Activated CD8-positive, alpha-beta T cell treated with anti-CD3 and anti-CD28 coated beads, Interleukin-2, amount 10 ng/mL, durations not matched to agents 7 days and 5 days (primary cell): ENCODE measurements at regions of chr2 and their contacts with region 1.

Region 1: GRCh38 chr2:101831351-101831865 is 133.9 kb downstream of the MAP4K4 start:
- DNase-seq: peak; percentile 74
- ATAC-seq: peak; percentile 73
- H3K4me3 Mint-ChIP-seq: no peak overlapping the region
- H3K27ac Mint-ChIP-seq: peak overlapping the region; percentile 66
- H3K4me1 Mint-ChIP-seq: peaks cover 54% of the 10 kb centered on the region
- H3K27me3 Mint-ChIP-seq: no peaks in the 10 kb centered on the region

Region 2: GRCh38 chr2:101419096-101419663 is 412.2 kb before region 1 on chr2:
- CTCF ChIA-PET with region 1: interaction called, 83 read pairs
- POLR2A ChIA-PET with region 1: no interaction called
- DNase-seq: peak; percentile 80
- ATAC-seq: peak; percentile 60
- H3K4me3 Mint-ChIP-seq: no peak overlapping the region
- H3K27ac Mint-ChIP-seq: no peak overlapping the region
- H3K4me1 Mint-ChIP-seq: peaks cover 2% of the 10 kb centered on the region
- H3K27me3 Mint-ChIP-seq: no peaks in the 10 kb centered on the region

Region 3: DNA sequence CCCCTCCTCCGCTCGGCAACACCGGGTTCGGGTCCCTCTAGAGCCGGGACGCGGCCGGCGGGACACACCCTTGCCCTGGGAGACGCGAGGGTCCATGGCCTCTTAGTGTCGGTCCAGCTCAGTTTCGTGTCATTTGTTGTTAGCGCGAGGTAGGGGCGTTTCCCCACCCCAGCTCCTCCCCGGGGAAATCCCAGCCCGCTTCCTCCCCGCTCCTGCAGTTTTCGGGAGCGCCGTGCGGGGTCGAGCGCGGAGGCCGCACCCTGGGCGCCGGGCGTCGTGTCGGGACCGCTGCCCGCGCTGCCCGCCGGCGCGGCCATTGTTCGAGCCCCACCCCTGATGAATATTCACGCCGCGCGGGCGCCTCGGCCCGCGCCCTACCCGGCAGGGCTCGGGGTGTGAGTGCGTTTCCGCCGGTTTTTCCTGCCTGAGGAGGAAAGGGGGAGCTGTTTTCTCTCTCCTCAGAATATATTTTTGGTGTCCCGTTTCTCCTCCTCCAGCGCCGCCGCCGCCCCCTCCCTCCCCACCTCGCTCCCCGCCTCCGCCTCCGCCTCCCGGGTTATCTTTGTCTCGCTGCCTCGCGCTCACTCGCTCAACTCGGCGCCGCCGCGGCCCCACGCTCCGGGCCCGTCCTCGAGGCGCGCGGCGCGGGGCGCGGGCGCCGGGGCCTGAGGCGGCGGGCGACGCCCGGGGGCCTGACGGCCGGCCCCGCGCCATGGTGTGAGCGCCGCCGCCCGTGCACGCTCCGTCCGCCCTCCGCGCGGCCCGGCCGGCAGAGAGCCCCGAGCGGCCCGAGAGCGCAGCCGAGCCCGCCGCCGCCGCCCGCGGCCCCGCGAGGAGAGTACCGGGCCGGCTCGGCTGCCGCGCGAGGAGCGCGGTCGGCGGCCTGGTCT is 134.0 kb before region 1 on chr2 and contains the start of gene MAP4K4:
- CTCF ChIA-PET with region 1: interaction called, 11 read pairs
- POLR2A ChIA-PET with region 1: interaction called, 3 read pairs
- DNase-seq: peak; percentile 84
- ATAC-seq: peak; percentile 73
- H3K4me3 Mint-ChIP-seq: peak within 1 kb of the TSS; percentile 86
- H3K27ac Mint-ChIP-seq: peak within 1 kb of the TSS; percentile 89
- H3K4me1 Mint-ChIP-seq: peaks cover 28% of the 10 kb centered on the region
- H3K27me3 Mint-ChIP-seq: peaks cover 12% of the 10 kb centered on the region
- total RNA-seq, gene MAP4K4: 90.2 to 92.2 TPM

Region 4: DNA sequence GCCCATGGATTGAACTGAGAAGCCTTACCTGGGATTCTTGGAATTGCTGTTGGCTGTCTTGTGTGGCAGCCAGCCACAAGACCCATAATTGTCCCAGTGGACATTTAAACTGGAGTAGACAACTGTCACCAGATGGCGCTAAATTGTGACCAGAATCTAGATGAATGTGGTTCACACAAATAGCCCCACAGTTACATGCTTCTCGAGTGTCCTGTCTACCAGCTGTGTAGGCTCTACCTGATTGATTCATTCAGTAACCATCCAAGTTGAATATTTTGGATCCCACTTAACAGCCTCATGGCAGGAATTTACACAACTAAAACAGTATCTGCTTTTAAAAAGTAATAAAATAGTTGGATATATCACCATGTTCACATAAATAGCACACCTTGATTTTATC is 60.7 kb before region 1 on chr2:
- CTCF ChIA-PET with region 1: interaction called, 15 read pairs
- POLR2A ChIA-PET with region 1: no interaction called
- DNase-seq: peak; percentile 31
- ATAC-seq: no peak
- H3K4me3 Mint-ChIP-seq: no peak overlapping the region
- H3K27ac Mint-ChIP-seq: no peak overlapping the region
- H3K4me1 Mint-ChIP-seq: peaks cover 73% of the 10 kb centered on the region
- H3K27me3 Mint-ChIP-seq: no peaks in the 10 kb centered on the region

Region 5: DNA sequence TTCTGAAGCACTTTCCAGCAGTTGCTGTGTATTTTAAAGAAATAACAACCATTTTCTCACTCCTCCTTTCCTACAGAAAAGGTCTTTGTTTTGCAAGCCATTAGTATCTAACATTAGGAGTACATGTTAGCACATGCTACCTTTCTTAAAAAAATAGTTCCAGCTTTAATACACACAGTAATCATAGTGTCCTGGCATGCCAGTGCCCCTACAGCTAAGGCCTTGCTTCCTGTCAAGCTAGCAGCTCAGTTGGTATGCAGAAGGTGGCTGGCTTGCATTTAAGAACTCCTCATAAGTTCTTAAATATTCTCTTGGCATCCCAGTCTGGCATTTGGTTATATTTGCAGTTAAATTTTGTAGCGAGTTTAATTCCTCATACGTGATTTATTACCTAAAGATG is 19.0 kb after region 1 on chr2:
- CTCF ChIA-PET with region 1: interaction called, 10 read pairs
- POLR2A ChIA-PET with region 1: no interaction called
- DNase-seq: no peak
- ATAC-seq: no peak
- H3K4me3 Mint-ChIP-seq: no peak overlapping the region
- H3K27ac Mint-ChIP-seq: no peak overlapping the region
- H3K4me1 Mint-ChIP-seq: no peaks in the 10 kb centered on the region
- H3K27me3 Mint-ChIP-seq: no peaks in the 10 kb centered on the region